ENCODE measurements at regions of chrX and their contacts with region 1.

Region 1: DNA sequence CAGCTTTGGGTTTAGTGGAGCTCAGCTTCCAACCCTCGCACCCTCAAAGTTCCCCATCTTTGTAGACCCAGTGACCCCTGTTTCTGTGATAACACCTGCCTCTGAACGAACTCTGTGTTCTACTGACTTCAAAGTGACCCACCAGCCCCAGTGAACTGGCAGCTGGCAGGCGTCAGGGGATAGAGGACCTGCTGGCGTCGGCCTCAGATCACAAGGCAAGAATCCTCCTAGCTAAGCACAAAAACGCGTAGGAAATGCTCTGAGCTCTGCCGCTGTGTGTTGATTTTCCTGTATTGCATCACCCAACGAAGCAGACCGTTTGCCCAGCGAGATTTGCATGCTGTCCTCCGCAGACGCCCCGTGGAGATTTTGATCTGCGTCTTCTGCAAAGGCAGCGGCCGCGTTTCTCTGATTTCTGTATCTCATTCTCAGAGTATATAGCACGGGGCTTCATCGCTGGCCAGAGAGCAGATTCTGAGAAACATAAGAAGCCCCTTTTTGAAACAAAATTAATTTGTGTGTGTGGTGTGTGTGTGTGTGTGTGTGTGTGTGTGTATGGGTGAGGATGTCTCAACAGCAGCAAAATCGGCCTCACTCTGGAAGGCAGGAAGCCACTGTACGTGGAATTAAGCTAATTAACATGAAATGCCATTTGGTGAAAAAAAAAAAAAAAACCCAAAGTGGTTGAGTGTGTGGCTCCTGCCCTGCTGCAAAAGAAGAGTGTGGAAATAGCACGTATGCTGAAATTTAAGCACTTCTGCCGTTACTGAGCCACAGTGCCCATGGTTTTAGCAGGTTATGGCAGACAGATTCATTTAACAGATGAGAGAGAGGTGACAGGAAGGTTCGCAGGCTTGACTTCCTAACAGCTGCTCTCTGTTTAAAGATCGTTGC is 29.2 kb upstream of the ASMTL start:
- DNase-seq: peak; percentile 54 to 94 (median 76)
- ATAC-seq: peak; percentile 82
- H3K4me3 ChIP-seq: peak overlapping the region; percentile 18 to 32
- H3K4me3 Mint-ChIP-seq: peak overlapping the region; percentile 64
- H3K27ac ChIP-seq: peak overlapping the region; percentile 66 to 91
- H3K27ac Mint-ChIP-seq: peak overlapping the region; percentile 96
- H3K4me1 ChIP-seq: peaks cover 58% of the 10 kb centered on the region
- H3K4me1 Mint-ChIP-seq: peaks cover 63% of the 10 kb centered on the region
- H3K27me3 ChIP-seq: no peaks in the 10 kb centered on the region
- H3K27me3 Mint-ChIP-seq: no peaks in the 10 kb centered on the region
- CTCF ChIP-seq: no peak

Region 2: GRCh38 chrX:1462596-1463251 is 19.2 kb before region 1 on chrX:
- CTCF ChIA-PET with region 1: no interaction called
- POLR2A ChIA-PET with region 1: no interaction called
- intact Hi-C with region 1: loop called in 1 of 2 experiments (anchors 2 kb)
- DNase-seq: peak; percentile 56 to 98 (median 75)
- ATAC-seq: peak; percentile 75
- H3K4me3 ChIP-seq: peak overlapping the region in 1 of 2 experiments; percentile 5
- H3K4me3 Mint-ChIP-seq: peak overlapping the region; percentile 23
- H3K27ac ChIP-seq: peak overlapping the region; percentile 63 to 92
- H3K27ac Mint-ChIP-seq: peak overlapping the region; percentile 95
- H3K4me1 ChIP-seq: peaks cover 54% of the 10 kb centered on the region
- H3K4me1 Mint-ChIP-seq: peaks cover 57% of the 10 kb centered on the region
- H3K27me3 ChIP-seq: no peaks in the 10 kb centered on the region
- H3K27me3 Mint-ChIP-seq: no peaks in the 10 kb centered on the region
- CTCF ChIP-seq: no peak

Region 3: GRCh38 chrX:1468250-1468772 is 13.6 kb before region 1 on chrX:
- CTCF ChIA-PET with region 1: no interaction called
- POLR2A ChIA-PET with region 1: no interaction called
- intact Hi-C with region 1: loop called (anchors 1 kb)
- DNase-seq: peak; percentile 56 to 92 (median 79)
- ATAC-seq: peak; percentile 25
- H3K4me3 ChIP-seq: peak overlapping the region in 1 of 2 experiments; percentile 33
- H3K4me3 Mint-ChIP-seq: peak overlapping the region; percentile 57
- H3K27ac ChIP-seq: peak overlapping the region; percentile 51 to 92
- H3K27ac Mint-ChIP-seq: peak overlapping the region; percentile 98
- H3K4me1 ChIP-seq: peaks cover 92% of the 10 kb centered on the region
- H3K4me1 Mint-ChIP-seq: peaks cover 81% of the 10 kb centered on the region
- H3K27me3 ChIP-seq: no peaks in the 10 kb centered on the region
- H3K27me3 Mint-ChIP-seq: no peaks in the 10 kb centered on the region
- CTCF ChIP-seq: no peak